ENCODE measurements at regions of chr19 and their contacts with region 1.

Region 1: GRCh38 chr19:913080-913748 is at the start of gene R3HDM4:
- DNase-seq: peak; percentile 60 to 65
- ATAC-seq: peak; percentile 93 to 95
- H3K4me3 ChIP-seq: peak within 1 kb of the TSS; percentile 72 to 90 (median 84)
- H3K27ac ChIP-seq: peak within 1 kb of the TSS; percentile 76 to 90 (median 84)
- H3K4me1 ChIP-seq: peaks cover 4 to 21% of the 10 kb centered on the region in 2 donors
- H3K27me3 ChIP-seq: peaks cover 16 to 24% (median 22%) of the 10 kb centered on the region in 3 donors
- CTCF ChIP-seq: no peak
- POLR2A ChIP-seq: peak; percentile 62 to 77
- total RNA-seq, gene R3HDM4: 37.2 to 49.1 (median 44.3) TPM

Region 2: GRCh38 chr19:892243-893050 is 20.8 kb before region 1 on chr19:
- in situ Hi-C with region 1: no loop called
- intact Hi-C with region 1: loop called (anchors 1 kb)
- DNase-seq: no peak
- ATAC-seq: peak; percentile 65 to 71
- H3K4me3 ChIP-seq: peak overlapping the region; percentile 73 to 84 (median 75)
- H3K27ac ChIP-seq: peak overlapping the region; percentile 81 to 91 (median 88)
- H3K4me1 ChIP-seq: peaks cover 0 to 9% of the 10 kb centered on the region in 2 donors
- H3K27me3 ChIP-seq: no peaks in the 10 kb centered on the region
- CTCF ChIP-seq: peak in 1 of 5 experiments; percentile 6
- POLR2A ChIP-seq: no peak

Measured in gastrocnemius medialis (tissue), 4 donors.